GM12878 (cell line): ENCODE measurements at regions of chr22 and their contacts with region 1.

Region 1: GRCh38 chr22:35622191-35622913 is 5.2 kb upstream of the MB start:
- DNase-seq: no peak
- ATAC-seq: no peak
- H3K4me3 ChIP-seq: no peak overlapping the region
- H3K27ac ChIP-seq: no peak overlapping the region
- H3K4me1 ChIP-seq: 0 out of 2 replicates have a peak, but pooled peaks cover under 1% of the 10 kb centered on the region
- H3K27me3 ChIP-seq: peaks cover 0 to 1% of the 10 kb centered on the region in 2 experiments; a peak in 1 of 4 replicates
- CTCF ChIP-seq: no peak
- EP300 ChIP-seq: no peak
- POLR2A ChIP-seq: no peak
- RAD21 ChIP-seq: no peak

Region 2: GRCh38 chr22:35292786-35293185 is 329.6 kb before region 1 on chr22:
- CTCF ChIA-PET with region 1: no interaction called
- POLR2A ChIA-PET with region 1: no interaction called
- RAD21 ChIA-PET with region 1: no interaction called
- SMC1A ChIA-PET with region 1: no interaction called
- in situ Hi-C with region 1: no loop called
- intact Hi-C with region 1: no loop called
- DNase-seq: no peak
- ATAC-seq: no peak
- H3K4me3 ChIP-seq: no peak overlapping the region
- H3K27ac ChIP-seq: no peak overlapping the region
- H3K4me1 ChIP-seq: no peaks in the 10 kb centered on the region
- H3K27me3 ChIP-seq: no peaks in the 10 kb centered on the region
- CTCF ChIP-seq: no peak
- EP300 ChIP-seq: no peak
- POLR2A ChIP-seq: no peak
- RAD21 ChIP-seq: no peak

Region 3: GRCh38 chr22:35524966-35525686 is 97.2 kb before region 1 on chr22:
- CTCF ChIA-PET with region 1: no interaction called
- POLR2A ChIA-PET with region 1: no interaction called
- RAD21 ChIA-PET with region 1: no interaction called
- SMC1A ChIA-PET with region 1: no interaction called
- in situ Hi-C with region 1: no loop called
- intact Hi-C with region 1: no loop called
- DNase-seq: no peak
- ATAC-seq: no peak
- H3K4me3 ChIP-seq: no peak overlapping the region
- H3K27ac ChIP-seq: no peak overlapping the region
- H3K4me1 ChIP-seq: no peaks in the 10 kb centered on the region
- H3K27me3 ChIP-seq: no peaks in the 10 kb centered on the region; a peak in 4 of 4 replicates
- CTCF ChIP-seq: no peak
- EP300 ChIP-seq: no peak
- POLR2A ChIP-seq: no peak
- RAD21 ChIP-seq: no peak

Region 4: GRCh38 chr22:35561796-35562526 is 60.4 kb before region 1 on chr22:
- CTCF ChIA-PET with region 1: no interaction called
- POLR2A ChIA-PET with region 1: no interaction called
- RAD21 ChIA-PET with region 1: no interaction called
- SMC1A ChIA-PET with region 1: no interaction called
- in situ Hi-C with region 1: no loop called
- intact Hi-C with region 1: no loop called
- DNase-seq: no peak
- ATAC-seq: peak; percentile 33; the same call in 1 of the 3 replicates
- H3K4me3 ChIP-seq: no peak overlapping the region
- H3K27ac ChIP-seq: no peak overlapping the region
- H3K4me1 ChIP-seq: no peaks in the 10 kb centered on the region
- H3K27me3 ChIP-seq: peaks cover 0 to 4% of the 10 kb centered on the region in 2 experiments; a peak in 2 of 4 replicates
- CTCF ChIP-seq: no peak
- EP300 ChIP-seq: no peak
- POLR2A ChIP-seq: no peak
- RAD21 ChIP-seq: no peak

Region 5: GRCh38 chr22:35914665-35915476 is 292.5 kb after region 1 on chr22:
- CTCF ChIA-PET with region 1: interaction called, 5 read pairs
- POLR2A ChIA-PET with region 1: no interaction called
- RAD21 ChIA-PET with region 1: interaction called, 4 read pairs
- SMC1A ChIA-PET with region 1: interaction called, 12 read pairs
- in situ Hi-C with region 1: loop called (anchors 5 kb)
- intact Hi-C with region 1: no loop called
- DNase-seq: no peak
- ATAC-seq: no peak
- H3K4me3 ChIP-seq: no peak overlapping the region
- H3K27ac ChIP-seq: no peak overlapping the region
- H3K4me1 ChIP-seq: no peaks in the 10 kb centered on the region
- H3K27me3 ChIP-seq: peaks cover 0 to 2% of the 10 kb centered on the region in 2 experiments; a peak in 2 of 4 replicates
- CTCF ChIP-seq: no peak
- EP300 ChIP-seq: no peak
- POLR2A ChIP-seq: no peak
- RAD21 ChIP-seq: no peak

Region 6: GRCh38 chr22:36123673-36124630 is 501.6 kb after region 1 on chr22:
- CTCF ChIA-PET with region 1: interaction called, 17 read pairs
- POLR2A ChIA-PET with region 1: no interaction called
- RAD21 ChIA-PET with region 1: no interaction called
- SMC1A ChIA-PET with region 1: interaction called, 12 read pairs
- in situ Hi-C with region 1: loop called (anchors 5 kb)
- intact Hi-C with region 1: loop called (anchors 1 kb)
- DNase-seq: peak; percentile 52
- ATAC-seq: peak; percentile 100
- H3K4me3 ChIP-seq: peak overlapping the region; percentile 26; the same call in 1 of the 2 replicates
- H3K27ac ChIP-seq: no peak overlapping the region
- H3K4me1 ChIP-seq: no peaks in the 10 kb centered on the region
- H3K27me3 ChIP-seq: no peaks in the 10 kb centered on the region
- CTCF ChIP-seq: peak; percentile 98 to 99 (median 99); a peak in 5 of 6 replicates
- EP300 ChIP-seq: no peak
- POLR2A ChIP-seq: 0 out of 2 replicates have a peak, but pooled peaks have one; percentile 30
- RAD21 ChIP-seq: peak; percentile 96